GM13976 (cell line): ENCODE measurements at regions of chr5 and their contacts with region 1.

Region 1: DNA sequence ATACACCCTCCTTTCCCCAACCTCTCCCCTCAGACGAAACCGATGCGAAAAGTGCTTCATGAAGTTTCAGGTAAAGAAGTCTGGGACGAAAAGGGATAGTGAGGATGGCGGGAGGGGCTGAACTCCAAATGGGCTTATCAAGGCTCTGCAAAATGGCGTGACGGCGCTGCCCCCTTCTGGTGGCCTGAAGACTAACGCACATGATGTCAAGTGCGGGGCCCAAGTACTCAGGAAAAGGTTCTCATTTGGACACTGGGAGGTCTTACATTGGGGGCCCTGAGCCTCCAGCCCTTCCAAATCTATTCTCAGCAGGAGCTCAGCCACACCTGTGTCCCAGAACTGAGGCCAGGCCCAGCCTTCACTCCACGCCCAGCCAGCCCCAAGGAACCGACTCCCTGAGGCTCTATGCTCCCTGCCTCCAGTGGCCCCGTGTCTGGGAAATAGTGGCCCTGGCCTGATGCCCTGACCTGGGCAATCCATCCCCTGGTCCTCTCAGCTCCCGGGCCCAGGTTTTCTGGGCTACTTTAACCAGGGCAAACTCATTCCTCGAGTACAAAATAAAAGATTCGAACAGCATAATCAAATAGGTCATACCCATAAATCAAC is 119.9 kb downstream of the KCNIP1 start:
- DNase-seq: peak; percentile 58
- CTCF ChIP-seq: peak; percentile 23

Region 2: DNA sequence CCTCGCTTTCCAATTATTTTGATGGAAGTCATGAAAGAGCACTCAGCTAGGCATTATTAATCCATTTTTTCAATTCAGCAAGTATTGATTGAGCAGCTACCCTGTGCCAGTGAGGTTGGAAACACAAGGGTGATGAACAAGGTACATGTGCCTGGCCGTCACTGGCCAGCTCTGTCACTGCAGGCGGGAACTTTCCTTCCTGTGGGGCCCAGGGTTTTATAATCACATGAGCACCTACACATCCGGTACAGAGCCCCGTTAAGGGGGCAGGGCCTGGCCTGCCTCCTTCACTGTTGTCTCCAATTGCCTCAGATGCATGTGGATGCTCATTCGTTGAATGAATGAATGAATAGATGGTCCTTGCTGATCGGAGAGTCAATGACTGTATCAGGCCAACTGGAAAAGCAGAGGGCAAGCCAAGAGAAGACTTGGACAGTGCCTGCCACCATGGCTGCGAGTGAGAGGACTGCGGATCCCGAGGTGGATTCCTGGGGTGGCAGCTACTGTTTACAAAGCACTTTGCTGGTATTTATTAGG is 178.6 kb before region 1 on chr5:
- in situ Hi-C with region 1: loop called (anchors 5 kb)
- DNase-seq: no peak
- CTCF ChIP-seq: no peak

Region 3: DNA sequence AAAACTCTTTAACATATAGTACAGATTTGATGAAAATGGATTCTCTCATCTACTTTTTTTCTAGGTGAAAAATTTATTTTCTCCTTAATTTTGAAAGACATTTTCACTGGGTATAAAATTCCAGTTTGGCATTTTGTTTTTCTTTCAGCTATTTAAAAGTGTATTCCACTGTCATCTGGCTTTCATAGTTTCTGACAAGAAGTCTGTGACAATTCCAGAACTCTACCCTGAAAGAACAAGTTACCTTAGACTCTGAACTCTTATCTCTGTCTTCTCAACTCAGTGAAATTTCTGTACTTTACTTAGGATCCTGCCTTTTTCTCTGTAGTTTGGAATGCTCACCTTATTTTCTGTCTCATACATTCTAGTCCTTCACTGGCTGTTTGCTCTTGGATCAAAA is 399.8 kb after region 1 on chr5:
- in situ Hi-C with region 1: no loop called
- DNase-seq: no peak
- CTCF ChIP-seq: no peak